ENCODE measurements at regions of chr3 and their contacts with region 1.

Region 1: GRCh38 chr3:150721285-150722130 is 17.8 kb upstream of the ERICH6 start:
- DNase-seq: no peak
- H3K4me3 ChIP-seq: peak overlapping the region in 2 of 4 donors; percentile 16 to 25
- H3K27ac ChIP-seq: no peak overlapping the region
- H3K4me1 ChIP-seq: peaks cover 0 to 6% (median 4%) of the 10 kb centered on the region in 4 donors
- H3K27me3 ChIP-seq: no peaks in the 10 kb centered on the region
- CTCF ChIP-seq: peak; percentile 74 to 87 (median 82)
- EP300 ChIP-seq: no peak
- POLR2A ChIP-seq: no peak

Region 2: GRCh38 chr3:150787741-150788370 is 66.3 kb after region 1 on chr3:
- intact Hi-C with region 1: loop called (anchors 5 kb)
- DNase-seq: peak; percentile 87
- H3K4me3 ChIP-seq: no peak overlapping the region
- H3K27ac ChIP-seq: no peak overlapping the region
- H3K4me1 ChIP-seq: no peaks in the 10 kb centered on the region
- H3K27me3 ChIP-seq: no peaks in the 10 kb centered on the region
- CTCF ChIP-seq: peak; percentile 68 to 82 (median 75)
- EP300 ChIP-seq: no peak
- POLR2A ChIP-seq: no peak

Region 3: GRCh38 chr3:150870396-150870795 is 148.9 kb after region 1 on chr3:
- intact Hi-C with region 1: loop called (anchors 2 kb)
- DNase-seq: no peak
- H3K4me3 ChIP-seq: no peak overlapping the region
- H3K27ac ChIP-seq: no peak overlapping the region
- H3K4me1 ChIP-seq: peaks cover 0 to 5% (median 0%) of the 10 kb centered on the region in 4 donors
- H3K27me3 ChIP-seq: no peaks in the 10 kb centered on the region
- CTCF ChIP-seq: no peak
- EP300 ChIP-seq: no peak
- POLR2A ChIP-seq: no peak

Region 4: GRCh38 chr3:150913133-150913922 is 191.8 kb after region 1 on chr3:
- intact Hi-C with region 1: no loop called
- DNase-seq: no peak
- H3K4me3 ChIP-seq: no peak overlapping the region
- H3K27ac ChIP-seq: no peak overlapping the region
- H3K4me1 ChIP-seq: no peaks in the 10 kb centered on the region
- H3K27me3 ChIP-seq: no peaks in the 10 kb centered on the region
- CTCF ChIP-seq: no peak
- EP300 ChIP-seq: no peak
- POLR2A ChIP-seq: no peak

Measured in sigmoid colon (tissue), 7 donors.